Mammary epithelial cell (primary cell): ENCODE measurements at regions of chr18 and their contacts with region 1.

Region 1: DNA sequence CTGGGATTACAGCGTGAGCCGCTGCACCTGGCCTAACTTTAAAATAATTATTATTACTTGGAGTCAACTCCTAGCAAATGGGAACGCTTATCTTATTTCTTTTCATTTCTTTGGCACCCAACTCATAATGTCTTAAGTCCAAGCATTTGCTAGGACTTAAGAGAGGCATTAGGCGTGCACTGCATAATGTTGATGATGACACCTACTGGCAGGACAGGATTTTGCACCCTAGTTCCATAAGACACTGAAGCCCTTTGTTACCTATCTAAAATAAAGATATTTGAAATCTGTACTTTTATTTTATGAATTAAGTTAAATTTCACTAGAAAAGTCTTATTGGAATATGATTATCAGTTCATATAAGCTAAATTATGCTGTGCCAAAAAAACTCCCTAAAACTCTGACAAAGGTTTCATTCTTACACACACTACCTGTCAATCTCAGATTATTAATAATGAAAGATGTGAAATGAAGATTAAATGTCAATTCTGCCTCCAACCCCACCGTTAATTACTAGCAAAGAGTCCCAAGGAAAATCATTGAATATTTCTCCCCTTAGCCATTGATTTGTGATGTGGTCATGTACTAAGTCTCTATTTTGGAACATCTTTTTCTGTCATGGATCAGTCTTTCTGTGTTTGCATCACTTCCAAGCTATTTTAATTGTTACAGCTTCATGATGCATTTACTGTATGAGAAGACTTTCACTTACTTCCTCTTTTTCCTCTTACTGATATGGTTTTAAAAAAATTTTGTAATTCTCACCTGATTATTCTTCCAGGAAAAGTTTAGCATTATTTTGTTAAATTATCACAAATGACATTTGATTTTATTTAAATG is 12.7 kb upstream of the CDH2 start:
- DNase-seq: peak; percentile 51
- H3K4me3 ChIP-seq: no peak overlapping the region
- H3K27ac ChIP-seq: no peak overlapping the region
- H3K4me1 ChIP-seq: no peaks in the 10 kb centered on the region
- H3K27me3 ChIP-seq: no peaks in the 10 kb centered on the region
- CTCF ChIP-seq: peak; percentile 83 to 86

Region 2: DNA sequence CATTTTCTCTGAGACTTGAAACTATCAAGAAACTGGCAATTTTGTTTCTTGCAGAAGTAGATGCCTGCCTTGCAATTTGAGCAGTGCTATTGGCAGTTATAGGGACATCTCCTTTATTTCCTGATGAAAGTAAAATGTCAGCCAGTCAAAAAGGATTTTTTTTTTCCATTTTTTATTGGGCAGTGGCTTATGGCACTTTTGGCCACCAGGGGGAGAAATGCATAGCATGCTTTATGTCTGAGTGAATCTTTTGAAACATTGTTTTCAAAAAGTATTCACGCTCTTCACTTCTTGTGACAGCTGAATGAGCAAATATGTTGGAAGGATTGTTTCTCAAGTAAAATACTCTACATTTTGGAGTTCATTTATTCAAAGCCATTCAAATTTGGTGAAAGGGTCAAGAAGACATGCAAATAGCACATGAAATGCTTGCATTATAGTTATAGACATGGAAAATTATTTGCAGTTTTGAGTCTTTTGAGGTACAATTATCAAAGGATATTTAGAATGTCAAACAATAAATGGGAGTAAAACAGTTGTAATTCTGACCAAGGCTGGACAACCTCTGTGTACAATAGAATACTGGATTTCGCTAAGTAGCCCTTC is 503.7 kb before region 1 on chr18:
- CTCF ChIA-PET with region 1: no interaction called
- dilution Hi-C with region 1: no loop called
- in situ Hi-C with region 1: no loop called
- intact Hi-C with region 1: loop called (anchors 1 kb)
- DNase-seq: peak; percentile 26
- H3K4me3 ChIP-seq: no peak overlapping the region
- H3K27ac ChIP-seq: no peak overlapping the region
- H3K4me1 ChIP-seq: no peaks in the 10 kb centered on the region
- H3K27me3 ChIP-seq: no peaks in the 10 kb centered on the region
- CTCF ChIP-seq: peak; percentile 77 to 80

Region 3: GRCh38 chr18:27778441-27778840 is 411.2 kb before region 1 on chr18:
- CTCF ChIA-PET with region 1: no interaction called
- dilution Hi-C with region 1: no loop called
- in situ Hi-C with region 1: no loop called
- intact Hi-C with region 1: loop called (anchors 1 kb)
- DNase-seq: peak; percentile 4
- H3K4me3 ChIP-seq: no peak overlapping the region
- H3K27ac ChIP-seq: no peak overlapping the region
- H3K4me1 ChIP-seq: no peaks in the 10 kb centered on the region
- H3K27me3 ChIP-seq: no peaks in the 10 kb centered on the region
- CTCF ChIP-seq: peak; percentile 45 to 78

Region 4: DNA sequence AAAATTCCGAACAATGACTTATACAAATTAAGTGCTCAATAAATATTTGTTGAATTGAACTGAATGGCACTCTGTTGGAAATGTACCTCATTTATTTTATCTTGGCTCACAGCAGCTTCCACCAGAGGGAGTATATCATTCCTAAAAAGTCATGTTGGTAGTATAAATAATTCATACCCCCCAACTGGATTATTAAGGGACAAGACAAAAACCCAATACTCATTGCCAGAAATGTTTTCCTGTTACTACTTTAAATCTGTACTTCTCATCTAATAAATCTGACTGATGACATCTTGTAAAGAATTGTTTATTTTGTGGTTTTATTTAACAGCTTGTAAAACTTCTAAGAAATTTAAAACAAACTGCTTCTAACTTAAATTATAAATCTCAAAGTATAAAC is 176.6 kb before region 1 on chr18:
- CTCF ChIA-PET with region 1: no interaction called
- dilution Hi-C with region 1: no loop called
- in situ Hi-C with region 1: no loop called
- intact Hi-C with region 1: loop called (anchors 5 kb)
- DNase-seq: no peak
- H3K4me3 ChIP-seq: no peak overlapping the region
- H3K27ac ChIP-seq: no peak overlapping the region
- H3K4me1 ChIP-seq: no peaks in the 10 kb centered on the region
- H3K27me3 ChIP-seq: peaks cover 2% of the 10 kb centered on the region
- CTCF ChIP-seq: peak; percentile 5 to 32

Region 5: DNA sequence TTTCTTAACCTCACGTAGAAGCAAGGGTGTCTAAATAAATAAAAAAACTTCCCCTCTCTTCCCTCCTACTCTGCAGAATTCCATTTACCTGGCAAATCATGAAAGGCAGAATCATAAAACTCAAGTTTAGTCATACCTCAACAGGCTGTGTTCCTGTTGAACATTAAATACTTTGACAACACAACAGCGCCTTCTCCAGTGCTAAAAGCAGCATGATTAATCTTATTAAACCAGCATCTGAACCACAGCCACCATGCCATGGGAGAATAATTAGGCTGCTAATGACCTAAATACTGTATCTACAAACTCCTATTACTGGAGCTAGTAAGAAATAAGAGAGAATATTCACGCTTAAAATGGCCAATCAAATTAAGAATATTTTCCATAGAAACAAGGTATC is 80.8 kb before region 1 on chr18:
- CTCF ChIA-PET with region 1: no interaction called
- dilution Hi-C with region 1: no loop called
- in situ Hi-C with region 1: no loop called
- intact Hi-C with region 1: no loop called
- DNase-seq: peak; percentile 33
- H3K4me3 ChIP-seq: no peak overlapping the region
- H3K27ac ChIP-seq: no peak overlapping the region
- H3K4me1 ChIP-seq: no peaks in the 10 kb centered on the region
- H3K27me3 ChIP-seq: no peaks in the 10 kb centered on the region
- CTCF ChIP-seq: peak in 1 of 2 donors; percentile 26